ENCODE measurements at regions of chr11 and their contacts with region 1.

Region 1: DNA sequence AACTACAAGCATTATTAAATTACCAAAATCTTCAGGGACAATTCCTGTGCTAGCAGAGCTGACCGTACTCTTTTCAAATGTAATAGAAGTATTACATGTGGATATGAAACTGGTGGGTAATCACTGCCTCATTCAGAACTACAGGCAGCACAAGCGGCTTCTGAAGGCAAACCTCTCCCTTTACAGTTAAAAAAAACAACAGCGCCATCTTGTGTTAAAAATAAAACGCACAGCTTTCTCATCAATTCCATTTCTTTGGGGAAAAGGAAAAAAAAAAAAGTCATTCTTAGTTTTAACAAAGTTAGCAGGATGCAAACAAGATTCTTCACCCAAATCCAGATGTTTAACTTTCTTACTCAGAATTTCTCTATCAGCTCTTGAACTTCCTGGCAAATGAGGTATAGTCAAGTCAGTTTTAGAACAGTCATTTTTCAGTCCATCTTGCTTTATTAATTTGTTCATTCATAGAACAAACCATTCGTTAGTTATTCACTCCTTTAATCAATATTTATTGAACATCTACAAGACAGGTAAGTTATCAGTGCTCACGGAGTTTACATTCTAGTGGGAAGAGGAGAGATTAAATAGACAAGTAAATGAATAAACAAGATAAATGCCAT is 331.8 kb upstream of the MPPED2 start:
- DNase-seq: no peak

Region 2: GRCh38 chr11:29432719-29433325 is 1485.1 kb before region 1 on chr11:
- intact Hi-C with region 1: loop called (anchors 2 kb)
- DNase-seq: no peak

Region 3: DNA sequence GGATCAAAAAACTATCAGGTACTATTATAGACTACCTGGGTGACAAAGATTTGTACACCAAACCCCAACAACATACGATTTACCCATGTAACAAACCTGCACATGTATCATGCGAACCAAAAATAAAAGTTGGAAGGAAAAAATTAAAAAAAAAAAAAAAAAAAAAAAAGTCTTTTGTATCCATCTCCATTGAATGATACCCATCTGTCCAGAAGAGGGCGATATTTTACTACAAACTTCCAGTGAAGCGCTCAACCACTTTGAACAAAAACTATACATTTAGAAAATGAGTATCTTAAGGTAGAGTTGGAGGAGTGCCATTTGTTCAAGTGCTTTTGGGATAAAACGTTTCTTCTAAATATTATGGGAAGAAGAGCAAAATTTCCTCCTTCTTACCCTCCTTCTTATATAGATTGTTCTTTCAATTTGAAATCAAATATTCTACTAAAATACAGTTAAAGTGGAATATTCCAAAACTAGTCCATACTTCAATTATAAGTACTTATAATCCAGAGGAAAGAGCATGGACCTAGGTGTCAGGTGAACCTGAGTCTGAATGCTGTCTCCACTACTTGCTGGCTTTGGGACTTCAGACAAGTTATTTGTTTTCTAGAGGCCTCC is 571.8 kb before region 1 on chr11:
- intact Hi-C with region 1: loop called (anchors 5 kb)
- DNase-seq: no peak

Region 4: GRCh38 chr11:30560206-30561106 is 357.5 kb before region 1 on chr11:
- intact Hi-C with region 1: no loop called
- DNase-seq: no peak

Region 5: DNA sequence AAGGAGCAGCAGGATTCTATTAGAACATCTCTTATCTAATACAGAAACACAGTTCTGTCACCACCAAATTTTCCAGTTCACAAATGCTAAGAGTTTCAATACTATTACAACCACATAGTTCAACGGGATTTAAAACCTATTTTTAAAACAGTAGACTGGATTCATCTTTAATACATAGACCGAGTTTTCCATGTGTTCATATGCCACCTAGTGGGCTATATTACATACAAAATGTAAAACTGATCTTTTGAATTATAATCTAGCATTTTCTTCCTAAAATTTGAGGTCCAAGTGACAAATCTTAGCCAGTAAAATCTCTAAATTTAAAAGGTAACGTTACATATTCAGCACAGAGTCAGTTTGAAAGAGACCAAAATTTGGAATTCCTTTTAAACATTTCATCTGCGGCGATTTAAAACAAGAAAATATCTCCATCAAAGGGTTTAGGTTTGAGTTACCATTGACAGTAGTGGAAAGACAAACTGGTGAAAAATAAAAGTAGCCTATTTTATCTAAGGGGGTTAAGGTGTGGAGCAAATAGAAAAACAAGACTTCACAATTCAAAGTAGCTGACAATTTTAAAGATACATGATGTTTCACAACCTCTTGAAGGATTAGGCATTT is 62.5 kb before region 1 on chr11:
- intact Hi-C with region 1: no loop called
- DNase-seq: no peak

Region 6: GRCh38 chr11:30949838-30950237 is 31.9 kb after region 1 on chr11:
- intact Hi-C with region 1: no loop called
- DNase-seq: no peak

Measured in posterior cingulate gyrus (tissue), 11 donors.